GM10248 (cell line): ENCODE measurements at regions of chr3 and their contacts with region 1.

Region 1: DNA sequence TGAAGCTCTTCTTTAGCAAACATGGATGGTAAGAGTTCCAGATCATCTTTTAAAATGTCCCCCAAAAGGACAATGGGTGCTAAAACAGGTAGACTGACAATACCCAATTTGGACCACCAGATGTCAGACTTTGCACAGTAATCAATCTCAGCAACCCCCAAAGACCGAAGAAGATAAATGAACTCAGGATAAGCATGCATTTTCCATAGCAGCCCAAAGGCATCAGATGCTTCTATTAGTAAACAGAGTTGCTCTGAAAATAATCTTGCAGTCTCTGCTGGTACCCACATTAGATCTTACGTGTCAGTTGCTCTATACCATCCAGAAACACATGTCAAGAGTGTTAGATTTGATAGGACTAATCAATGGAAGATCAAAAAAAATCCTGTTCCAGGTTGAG is 20.6 kb downstream of the MYH15 start:
- DNase-seq: peak; percentile 53
- CTCF ChIP-seq: peak; percentile 74

Region 2: DNA sequence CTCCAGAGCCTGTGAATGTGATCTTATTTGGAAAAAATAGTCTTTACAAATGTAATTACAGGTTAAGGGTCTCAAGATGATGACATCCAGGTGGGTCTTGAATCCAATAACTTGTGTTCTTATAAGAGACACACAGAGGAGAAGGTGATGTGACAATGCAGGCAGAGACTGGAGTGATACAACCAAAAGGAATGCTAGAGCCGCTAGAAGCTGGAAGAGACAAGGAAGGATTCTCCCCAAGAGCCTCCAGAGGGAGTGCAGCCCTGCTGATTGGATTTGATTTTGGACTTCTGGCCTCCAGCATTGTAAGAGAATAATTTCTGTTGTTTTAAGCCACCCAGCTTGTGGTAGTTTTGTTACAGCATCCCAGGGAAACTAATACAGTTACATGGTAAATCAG is 11.0 kb after region 1 on chr3:
- CTCF ChIA-PET with region 1: interaction called, 23 read pairs
- POLR2A ChIA-PET with region 1: no interaction called
- DNase-seq: no peak
- CTCF ChIP-seq: no peak

Region 3: GRCh38 chr3:108513961-108514360 is 24.2 kb after region 1 on chr3:
- CTCF ChIA-PET with region 1: interaction called, 12 read pairs
- POLR2A ChIA-PET with region 1: no interaction called
- DNase-seq: no peak
- CTCF ChIP-seq: no peak